CD14-positive monocyte (primary cell): ENCODE measurements at regions of chr10 and their contacts with region 1.

Region 1: GRCh38 chr10:116490028-116490662 is 55.6 kb upstream of the PNLIP start:
- DNase-seq: peak; percentile 9 to 57 (median 23)
- H3K4me3 ChIP-seq: no peak overlapping the region
- H3K4me3 Mint-ChIP-seq: no peak overlapping the region
- H3K27ac ChIP-seq: no peak overlapping the region
- H3K27ac Mint-ChIP-seq: no peak overlapping the region
- H3K4me1 ChIP-seq: no peaks in the 10 kb centered on the region
- H3K4me1 Mint-ChIP-seq: no peaks in the 10 kb centered on the region
- H3K27me3 ChIP-seq: peaks cover 0 to 3% of the 10 kb centered on the region in 2 donors
- H3K27me3 Mint-ChIP-seq: peaks cover 1 to 5% (median 2%) of the 10 kb centered on the region in 3 donors
- CTCF ChIP-seq: peak; percentile 76

Region 2: DNA sequence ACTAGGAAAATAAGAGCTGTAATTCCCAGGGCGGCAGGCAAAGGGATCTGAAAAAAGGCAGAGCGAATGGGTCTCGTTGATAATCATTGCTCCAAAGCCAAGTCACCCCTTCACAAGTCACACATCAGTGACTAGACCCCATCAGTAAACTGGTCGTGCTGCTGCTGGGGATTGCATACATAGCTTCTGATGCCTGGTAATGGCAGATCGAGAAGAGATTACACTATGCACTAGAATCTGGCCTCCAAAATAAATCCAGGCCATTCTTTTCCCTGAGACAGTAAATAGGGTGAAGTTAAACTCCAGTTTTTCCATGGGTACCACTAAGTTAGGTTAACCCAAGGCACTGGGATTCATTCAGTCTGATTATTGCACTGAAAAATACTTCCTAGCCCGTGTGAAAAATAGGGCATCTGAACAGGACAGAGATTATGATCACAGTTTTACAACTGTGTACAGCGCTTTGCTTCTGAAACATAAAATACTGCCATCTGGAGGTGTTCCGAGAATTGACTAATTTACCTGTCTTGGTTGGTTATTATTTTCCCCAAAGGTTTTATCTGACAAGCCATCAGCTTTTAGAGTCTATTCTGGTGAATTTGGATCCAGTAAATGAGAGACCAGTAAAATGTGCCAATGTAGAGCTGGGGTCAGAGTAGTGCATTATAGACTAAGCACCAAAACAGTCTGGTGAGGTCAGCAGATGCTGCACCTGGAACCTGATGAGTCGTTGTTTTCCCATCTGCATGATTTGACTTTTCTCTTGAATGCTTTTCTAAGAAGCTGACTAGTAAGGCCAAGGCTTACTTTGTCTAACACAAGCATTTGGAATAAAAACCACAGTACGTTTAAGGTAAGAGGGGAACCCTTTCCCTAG is 2003.0 kb before region 1 on chr10:
- intact Hi-C with region 1: no loop called
- DNase-seq: no peak
- H3K4me3 ChIP-seq: no peak overlapping the region
- H3K4me3 Mint-ChIP-seq: no peak overlapping the region
- H3K27ac ChIP-seq: no peak overlapping the region
- H3K27ac Mint-ChIP-seq: no peak overlapping the region
- H3K4me1 ChIP-seq: no peaks in the 10 kb centered on the region
- H3K4me1 Mint-ChIP-seq: no peaks in the 10 kb centered on the region
- H3K27me3 ChIP-seq: no peaks in the 10 kb centered on the region
- H3K27me3 Mint-ChIP-seq: peaks cover 0 to 2% (median 1%) of the 10 kb centered on the region in 3 donors
- CTCF ChIP-seq: no peak

Region 3: DNA sequence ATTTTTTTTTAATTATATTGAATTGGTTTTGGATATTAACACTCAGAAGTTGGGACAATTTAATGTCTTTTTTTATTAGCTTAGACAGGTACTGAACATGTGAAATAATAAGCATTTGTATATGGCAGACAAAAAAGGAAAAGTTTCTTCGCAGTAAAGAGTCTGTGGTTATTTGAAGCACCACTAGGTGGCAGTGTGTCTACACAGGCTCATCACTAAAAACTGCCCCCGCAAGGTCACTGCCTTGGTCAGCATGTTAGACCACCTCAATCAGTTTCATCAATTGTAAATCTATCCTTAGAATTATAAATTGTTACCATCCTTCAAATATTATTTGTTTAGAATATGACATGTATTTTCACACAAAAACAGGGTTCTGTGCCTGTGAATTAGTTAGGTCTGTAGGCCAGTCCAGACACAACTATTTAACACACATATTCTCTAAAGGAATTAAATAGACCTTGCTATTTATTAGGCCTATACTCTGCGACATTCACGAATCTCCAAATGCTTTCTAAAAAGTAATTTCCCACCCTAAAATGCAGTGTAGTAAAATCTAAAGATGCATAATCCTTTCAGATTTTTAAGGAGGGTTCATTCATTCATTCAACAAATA is 45.5 kb before region 1 on chr10:
- intact Hi-C with region 1: loop called (anchors 5 kb)
- DNase-seq: peak; percentile 11 to 48 (median 42)
- H3K4me3 ChIP-seq: no peak overlapping the region
- H3K4me3 Mint-ChIP-seq: no peak overlapping the region
- H3K27ac ChIP-seq: no peak overlapping the region
- H3K27ac Mint-ChIP-seq: no peak overlapping the region
- H3K4me1 ChIP-seq: no peaks in the 10 kb centered on the region
- H3K4me1 Mint-ChIP-seq: no peaks in the 10 kb centered on the region
- H3K27me3 ChIP-seq: no peaks in the 10 kb centered on the region
- H3K27me3 Mint-ChIP-seq: peaks cover 2 to 3% (median 2%) of the 10 kb centered on the region in 3 donors
- CTCF ChIP-seq: peak; percentile 94